T-cell (primary cell): ENCODE measurements at regions of chr1 and their contacts with region 1.

Region 1: GRCh38 chr1:35577071-35577998 is 4.2 kb downstream of the TFAP2E start:
- DNase-seq: peak in 34 of 35 experiments; percentile 39 to 74 (median 58)
- ATAC-seq: peak; percentile 84 to 91 (median 88)
- H3K4me3 ChIP-seq: peak overlapping the region; percentile 62 to 82
- H3K4me3 Mint-ChIP-seq: peak overlapping the region; percentile 83 to 94 (median 87)
- H3K27ac ChIP-seq: no peak overlapping the region
- H3K27ac Mint-ChIP-seq: peak overlapping the region; percentile 71 to 87
- H3K4me1 ChIP-seq: peaks cover 9 to 40% of the 10 kb centered on the region in 2 experiments
- H3K4me1 Mint-ChIP-seq: peaks cover 24 to 31% (median 28%) of the 10 kb centered on the region in 3 donors
- H3K27me3 ChIP-seq: peaks cover 0 to 6% of the 10 kb centered on the region in 2 experiments
- H3K27me3 Mint-ChIP-seq: no peaks in the 10 kb centered on the region

Region 2: DNA sequence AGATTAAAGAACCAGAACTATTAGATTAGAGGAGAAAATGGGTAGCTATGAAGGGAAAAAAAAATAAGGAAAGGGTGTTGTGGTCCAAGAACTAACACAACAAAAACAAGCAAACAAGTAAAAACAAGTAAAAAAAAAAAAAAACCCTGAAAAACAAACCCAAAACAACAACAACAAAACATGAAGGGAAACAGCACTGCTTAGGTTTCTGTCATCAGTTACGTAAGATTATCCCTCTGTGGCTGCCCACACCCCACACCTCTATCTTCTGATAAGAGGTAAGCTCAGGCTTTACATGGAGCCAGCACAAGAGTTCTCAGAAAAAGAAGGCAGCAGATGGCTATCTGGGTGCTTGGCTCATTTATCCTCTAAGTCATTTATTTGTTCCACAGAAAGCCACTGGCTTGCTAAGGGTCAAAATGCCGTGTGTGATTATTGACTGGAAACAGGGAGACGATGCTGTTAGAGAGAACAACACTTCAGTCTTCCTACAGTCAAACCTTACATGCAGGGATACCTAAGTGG is 77.6 kb before region 1 on chr1:
- CTCF ChIA-PET with region 1: no interaction called
- POLR2A ChIA-PET with region 1: no interaction called
- DNase-seq: peak in 30 of 35 experiments; percentile 5 to 62 (median 25)
- ATAC-seq: peak; percentile 64 to 97 (median 86)
- H3K4me3 ChIP-seq: no peak overlapping the region
- H3K4me3 Mint-ChIP-seq: no peak overlapping the region
- H3K27ac ChIP-seq: peak overlapping the region; percentile 72
- H3K27ac Mint-ChIP-seq: peak overlapping the region; percentile 89 to 90
- H3K4me1 ChIP-seq: peaks cover 11 to 14% of the 10 kb centered on the region in 2 experiments
- H3K4me1 Mint-ChIP-seq: peaks cover 47 to 51% (median 49%) of the 10 kb centered on the region in 3 donors
- H3K27me3 ChIP-seq: no peaks in the 10 kb centered on the region
- H3K27me3 Mint-ChIP-seq: no peaks in the 10 kb centered on the region

Region 3: GRCh38 chr1:35554261-35555211 is 22.8 kb before region 1 on chr1:
- CTCF ChIA-PET with region 1: no interaction called
- POLR2A ChIA-PET with region 1: interaction called in 1 of 2 experiments, 11 read pairs
- DNase-seq: no peak
- ATAC-seq: no peak
- H3K4me3 ChIP-seq: no peak overlapping the region
- H3K4me3 Mint-ChIP-seq: peak overlapping the region in 1 of 3 donors; percentile 100
- H3K27ac ChIP-seq: no peak overlapping the region
- H3K27ac Mint-ChIP-seq: peak overlapping the region in 1 of 2 donors; percentile 2
- H3K4me1 ChIP-seq: peaks cover 16 to 29% of the 10 kb centered on the region in 2 experiments
- H3K4me1 Mint-ChIP-seq: peaks cover 65 to 66% (median 65%) of the 10 kb centered on the region in 3 donors
- H3K27me3 ChIP-seq: no peaks in the 10 kb centered on the region
- H3K27me3 Mint-ChIP-seq: no peaks in the 10 kb centered on the region

Region 4: DNA sequence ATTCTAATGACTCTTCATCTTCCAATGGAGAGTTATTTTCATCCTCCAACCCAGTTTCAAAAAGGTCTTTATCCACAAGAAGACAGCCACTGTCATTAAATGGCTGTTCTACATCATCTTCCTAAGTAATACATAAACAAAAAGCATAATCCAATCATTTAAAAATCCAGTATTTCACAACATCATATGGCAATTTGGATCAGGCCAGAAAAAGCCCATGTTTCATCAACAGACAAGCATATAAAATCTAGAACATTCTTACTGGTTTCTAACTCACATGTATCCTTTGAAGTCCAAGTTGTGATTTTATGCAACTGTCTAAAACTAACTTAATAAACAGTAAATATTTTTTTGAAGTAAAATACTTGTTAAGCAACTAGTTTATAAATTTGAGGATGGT is 185.9 kb after region 1 on chr1:
- CTCF ChIA-PET with region 1: no interaction called
- POLR2A ChIA-PET with region 1: interaction called in 1 of 2 experiments, 10 read pairs
- DNase-seq: no peak
- ATAC-seq: no peak
- H3K4me3 ChIP-seq: no peak overlapping the region
- H3K4me3 Mint-ChIP-seq: no peak overlapping the region
- H3K27ac ChIP-seq: no peak overlapping the region
- H3K27ac Mint-ChIP-seq: no peak overlapping the region
- H3K4me1 ChIP-seq: no peaks in the 10 kb centered on the region
- H3K4me1 Mint-ChIP-seq: peaks cover 0 to 9% (median 4%) of the 10 kb centered on the region in 3 donors
- H3K27me3 ChIP-seq: no peaks in the 10 kb centered on the region
- H3K27me3 Mint-ChIP-seq: no peaks in the 10 kb centered on the region

Region 5: GRCh38 chr1:36024839-36025238 is 447.5 kb after region 1 on chr1:
- CTCF ChIA-PET with region 1: no interaction called
- POLR2A ChIA-PET with region 1: no interaction called
- DNase-seq: no peak
- ATAC-seq: no peak
- H3K4me3 ChIP-seq: no peak overlapping the region
- H3K4me3 Mint-ChIP-seq: no peak overlapping the region
- H3K27ac ChIP-seq: no peak overlapping the region
- H3K27ac Mint-ChIP-seq: no peak overlapping the region
- H3K4me1 ChIP-seq: no peaks in the 10 kb centered on the region
- H3K4me1 Mint-ChIP-seq: peaks cover 0 to 2% (median 0%) of the 10 kb centered on the region in 3 donors
- H3K27me3 ChIP-seq: no peaks in the 10 kb centered on the region
- H3K27me3 Mint-ChIP-seq: no peaks in the 10 kb centered on the region